Motor neuron (in vitro differentiated cells): ENCODE measurements at regions of chr11 and their contacts with region 1.

Region 1: DNA sequence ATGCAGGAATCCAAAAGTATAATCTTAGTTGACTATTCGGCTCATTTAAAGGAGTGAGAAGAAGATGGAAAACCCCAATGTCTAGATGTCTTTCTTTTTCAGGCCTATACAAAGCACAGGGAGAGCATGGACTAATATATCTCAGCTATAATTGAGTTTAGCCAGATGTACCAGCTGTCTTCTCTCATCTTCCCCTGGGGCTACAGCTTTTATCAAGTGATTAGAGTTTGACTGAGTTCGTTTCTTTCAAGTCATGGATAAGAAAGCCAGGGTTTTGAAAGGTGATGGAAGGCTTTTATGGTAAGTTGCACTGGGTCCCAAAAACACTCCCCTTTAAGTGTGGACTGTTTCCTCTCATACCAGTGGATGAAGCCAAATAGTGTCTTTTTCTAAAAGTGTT is 1172.8 kb upstream of the TENM4 start:
- ATAC-seq: no peak
- H3K4me3 ChIP-seq: no peak overlapping the region
- H3K27ac ChIP-seq: no peak overlapping the region
- H3K4me1 ChIP-seq: no peaks in the 10 kb centered on the region

Region 2: DNA sequence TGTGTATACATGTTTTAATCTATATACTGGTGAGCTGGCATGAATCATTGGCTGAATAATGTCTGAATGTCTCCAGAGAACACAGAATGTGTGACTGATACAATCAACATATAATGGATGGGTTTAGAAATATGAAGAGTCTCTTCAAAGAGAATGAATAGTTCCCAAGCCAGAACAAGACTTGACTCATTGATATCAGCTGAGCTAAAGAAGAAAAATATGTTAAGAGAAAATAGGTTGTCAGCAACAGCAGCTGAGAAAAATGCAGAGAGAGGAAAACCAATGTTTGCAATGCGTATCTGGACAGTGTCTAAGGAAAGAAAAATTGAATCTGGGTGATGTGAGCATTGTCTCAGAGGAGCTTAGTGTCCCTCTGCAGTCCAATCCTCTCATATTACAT is 109.0 kb after region 1 on chr11:
- in situ Hi-C with region 1: loop called in 1 of 9 experiments (anchors 25 kb)
- ATAC-seq: peak; percentile 50 to 95 (median 90)
- H3K4me3 ChIP-seq: no peak overlapping the region
- H3K27ac ChIP-seq: no peak overlapping the region
- H3K4me1 ChIP-seq: peaks cover 8 to 10% of the 10 kb centered on the region in 2 donors